ENCODE measurements at regions of chr1 and their contacts with region 1.

Region 1: DNA sequence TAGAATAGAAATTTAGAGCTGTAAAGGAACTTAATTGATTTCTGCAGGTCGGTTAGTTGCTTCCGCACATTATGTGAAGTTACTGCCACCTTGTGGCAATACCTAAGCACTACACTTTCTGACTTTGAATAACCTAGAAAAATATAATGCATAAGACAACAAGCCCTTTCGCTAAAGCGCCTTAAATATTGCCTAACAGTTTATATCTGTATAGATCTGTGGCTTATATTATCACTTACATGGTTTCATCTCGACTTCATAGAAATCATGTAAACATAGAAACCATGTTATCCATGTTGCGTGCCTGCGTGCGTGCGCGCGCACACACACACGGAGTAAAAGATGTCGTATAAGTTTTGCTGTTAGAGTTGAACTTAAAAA is 10.9 kb upstream of the IFI16 start:
- DNase-seq: peak in 9 of 14 experiments; percentile 21 to 82 (median 40)
- ATAC-seq: peak; percentile 82
- H3K4me3 ChIP-seq: no peak overlapping the region
- H3K4me3 Mint-ChIP-seq: peak overlapping the region; percentile 57
- H3K27ac ChIP-seq: no peak overlapping the region
- H3K27ac Mint-ChIP-seq: peak overlapping the region; percentile 4
- H3K4me1 ChIP-seq: peaks cover 7% of the 10 kb centered on the region
- H3K4me1 Mint-ChIP-seq: peaks cover 32% of the 10 kb centered on the region
- H3K27me3 ChIP-seq: no peaks in the 10 kb centered on the region
- H3K27me3 Mint-ChIP-seq: no peaks in the 10 kb centered on the region
- CTCF ChIP-seq: peak; percentile 93

Region 2: DNA sequence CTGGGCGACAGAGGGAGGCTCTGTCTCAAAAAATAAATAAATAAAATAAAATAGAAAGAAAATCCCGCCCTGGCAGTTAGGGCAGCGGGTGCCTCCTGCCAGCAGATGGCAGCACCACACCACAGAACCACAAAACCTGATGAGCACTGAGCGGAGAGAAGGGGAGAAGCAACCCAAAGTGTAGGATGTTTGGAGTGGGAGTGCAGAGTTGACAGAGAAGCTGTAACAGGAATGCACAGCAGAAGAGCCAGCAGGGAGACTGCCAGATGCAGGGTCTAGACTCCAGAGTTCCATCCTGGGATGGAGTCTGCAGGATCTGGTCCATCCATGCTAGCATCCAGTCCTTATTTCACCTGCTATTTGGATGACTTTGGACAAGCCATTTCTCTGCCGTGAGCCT is 1035.1 kb before region 1 on chr1:
- CTCF ChIA-PET with region 1: no interaction called
- POLR2A ChIA-PET with region 1: no interaction called
- intact Hi-C with region 1: loop called in 1 of 2 experiments (anchors 10 kb)
- DNase-seq: peak; percentile 8 to 67 (median 34)
- ATAC-seq: no peak
- H3K4me3 ChIP-seq: no peak overlapping the region
- H3K4me3 Mint-ChIP-seq: no peak overlapping the region
- H3K27ac ChIP-seq: no peak overlapping the region
- H3K27ac Mint-ChIP-seq: no peak overlapping the region
- H3K4me1 ChIP-seq: no peaks in the 10 kb centered on the region
- H3K4me1 Mint-ChIP-seq: no peaks in the 10 kb centered on the region
- H3K27me3 ChIP-seq: peaks cover 0 to 8% of the 10 kb centered on the region in 2 experiments
- H3K27me3 Mint-ChIP-seq: peaks cover 46% of the 10 kb centered on the region
- CTCF ChIP-seq: peak; percentile 75

Region 3: DNA sequence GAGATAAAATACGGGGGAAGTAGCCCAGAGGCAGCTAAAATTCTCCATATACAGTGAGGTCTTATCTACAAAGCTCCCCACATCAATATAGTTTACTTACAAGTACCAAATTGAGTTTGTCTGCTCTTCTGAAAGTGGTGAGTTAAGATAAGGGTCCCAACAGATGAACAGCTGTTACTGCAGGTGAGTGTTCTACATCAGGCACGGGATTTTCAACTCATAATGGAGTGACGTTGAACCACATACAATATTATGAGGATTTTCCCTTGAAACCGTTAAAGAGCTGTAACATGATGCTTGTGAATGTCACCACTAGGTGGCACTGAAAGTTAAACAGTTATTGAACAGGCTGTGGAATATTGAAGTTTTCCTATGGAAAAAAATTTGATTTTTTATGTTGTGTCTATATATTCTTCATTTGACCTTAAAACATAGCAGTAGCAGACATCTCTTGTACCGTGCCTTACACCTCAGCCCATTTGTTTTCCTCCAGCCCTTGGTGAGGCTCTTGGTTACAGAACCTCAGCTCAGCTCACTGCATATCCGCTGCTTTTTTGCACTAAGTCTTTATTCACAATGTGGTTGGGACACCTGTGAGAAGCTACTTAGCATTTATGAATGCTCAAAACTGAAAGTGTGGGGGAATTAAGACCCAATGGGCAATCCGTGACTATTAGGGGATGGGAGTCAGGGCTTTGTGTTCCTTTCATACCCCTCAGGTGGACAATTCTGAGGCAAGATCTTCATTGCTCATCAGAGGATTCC is 794.9 kb before region 1 on chr1:
- CTCF ChIA-PET with region 1: interaction called, 7 read pairs
- POLR2A ChIA-PET with region 1: interaction called, 3 read pairs
- intact Hi-C with region 1: loop called in 1 of 2 experiments (anchors 2 kb)
- DNase-seq: peak in 4 of 14 experiments; percentile 22 to 71 (median 56)
- ATAC-seq: peak; percentile 54
- H3K4me3 ChIP-seq: no peak overlapping the region
- H3K4me3 Mint-ChIP-seq: no peak overlapping the region
- H3K27ac ChIP-seq: no peak overlapping the region
- H3K27ac Mint-ChIP-seq: no peak overlapping the region
- H3K4me1 ChIP-seq: peaks cover 4% of the 10 kb centered on the region
- H3K4me1 Mint-ChIP-seq: peaks cover 18% of the 10 kb centered on the region
- H3K27me3 ChIP-seq: peaks cover 2 to 6% of the 10 kb centered on the region in 2 experiments
- H3K27me3 Mint-ChIP-seq: peaks cover 17% of the 10 kb centered on the region
- CTCF ChIP-seq: peak; percentile 95

Region 4: DNA sequence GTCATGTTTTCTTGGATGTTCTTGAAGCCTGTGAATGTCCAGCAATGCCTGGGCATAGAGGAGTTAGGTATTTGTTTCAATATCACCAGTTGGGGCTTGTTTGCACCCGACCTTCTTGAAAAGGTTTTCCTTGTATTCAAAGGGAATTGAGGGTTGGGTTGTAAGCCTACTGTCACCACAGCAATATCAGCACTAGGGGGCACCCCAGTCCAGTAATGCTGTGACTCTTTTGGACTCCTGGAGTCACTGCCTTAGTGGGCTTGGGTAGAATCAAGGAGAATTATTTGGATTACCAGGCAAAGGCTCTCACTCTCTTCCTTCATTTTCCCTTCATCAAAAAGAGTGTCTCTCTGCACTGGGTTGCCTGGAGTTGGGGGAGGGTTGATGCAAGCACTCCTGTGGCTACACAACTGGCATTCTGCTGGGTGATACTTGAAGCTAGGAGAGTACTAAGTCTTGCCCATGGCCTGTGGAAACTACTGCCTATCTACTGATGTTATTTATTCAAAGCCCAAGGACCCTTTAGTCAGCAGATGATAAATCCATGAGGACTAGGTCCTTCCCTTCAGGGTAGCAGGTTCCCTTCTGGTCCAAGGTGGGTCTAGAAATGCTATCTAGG is 492.3 kb before region 1 on chr1:
- CTCF ChIA-PET with region 1: no interaction called
- POLR2A ChIA-PET with region 1: no interaction called
- intact Hi-C with region 1: loop called (anchors 1 to 2 kb)
- DNase-seq: peak; percentile 4 to 61 (median 10)
- ATAC-seq: no peak
- H3K4me3 ChIP-seq: no peak overlapping the region
- H3K4me3 Mint-ChIP-seq: no peak overlapping the region
- H3K27ac ChIP-seq: no peak overlapping the region
- H3K27ac Mint-ChIP-seq: no peak overlapping the region
- H3K4me1 ChIP-seq: no peaks in the 10 kb centered on the region
- H3K4me1 Mint-ChIP-seq: no peaks in the 10 kb centered on the region
- H3K27me3 ChIP-seq: peaks cover 4 to 5% of the 10 kb centered on the region in 2 experiments
- H3K27me3 Mint-ChIP-seq: peaks cover 18% of the 10 kb centered on the region
- CTCF ChIP-seq: peak; percentile 22

Region 5: GRCh38 chr1:158931055-158931737 is 67.6 kb before region 1 on chr1 and contains the start of gene PYHIN1:
- CTCF ChIA-PET with region 1: interaction called, 3 read pairs
- POLR2A ChIA-PET with region 1: no interaction called
- intact Hi-C with region 1: loop called in 1 of 2 experiments (anchors 5 kb)
- DNase-seq: peak in 8 of 14 experiments; percentile 7 to 85 (median 45)
- ATAC-seq: peak; percentile 81
- H3K4me3 ChIP-seq: peak within 1 kb of the TSS; percentile 67
- H3K4me3 Mint-ChIP-seq: peak within 1 kb of the TSS; percentile 97
- H3K27ac ChIP-seq: peak within 1 kb of the TSS; percentile 63 to 74
- H3K27ac Mint-ChIP-seq: peak within 1 kb of the TSS; percentile 84
- H3K4me1 ChIP-seq: peaks cover 19% of the 10 kb centered on the region
- H3K4me1 Mint-ChIP-seq: peaks cover 32% of the 10 kb centered on the region
- H3K27me3 ChIP-seq: no peaks in the 10 kb centered on the region
- H3K27me3 Mint-ChIP-seq: no peaks in the 10 kb centered on the region
- CTCF ChIP-seq: no peak
- total RNA-seq, gene PYHIN1: 15.2 to 16.2 TPM